HEK293T (cell line): ENCODE measurements at regions of chr3 and their contacts with region 1.

Region 1: DNA sequence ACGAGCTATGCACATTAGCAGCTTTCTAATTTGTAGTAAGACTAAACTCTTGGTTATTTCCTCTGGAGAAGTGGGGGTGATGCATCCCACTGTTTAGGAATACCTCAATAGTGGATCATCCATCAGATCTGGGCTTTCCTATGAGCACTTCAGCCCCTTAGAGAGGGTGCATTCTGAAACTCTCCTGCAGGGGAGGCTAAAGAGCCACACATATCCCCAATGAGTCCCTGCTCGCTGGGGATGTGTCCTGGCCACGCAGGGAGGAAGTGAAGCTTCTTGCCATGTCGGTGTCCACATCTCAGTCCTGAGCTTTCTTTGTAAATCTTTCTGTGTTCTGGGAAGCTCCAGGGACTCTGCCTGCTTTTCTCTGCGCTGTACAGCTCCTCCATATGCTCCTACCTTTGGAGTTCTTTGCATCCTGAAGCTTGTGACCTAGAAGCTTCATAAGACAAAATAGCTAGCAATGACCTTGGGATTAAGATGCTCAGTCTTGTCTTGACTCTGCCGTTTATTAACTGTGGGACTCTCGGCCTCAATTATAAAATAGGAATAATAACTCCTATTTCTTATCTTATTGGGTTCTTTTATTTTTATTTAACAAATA is 28.3 kb upstream of the MASP1 start:
- DNase-seq: peak; percentile 60

Region 2: GRCh38 chr3:187223799-187224198 is 96.0 kb before region 1 on chr3:
- CTCF ChIA-PET with region 1: interaction called, 10 read pairs
- POLR2A ChIA-PET with region 1: no interaction called
- DNase-seq: no peak

Region 3: DNA sequence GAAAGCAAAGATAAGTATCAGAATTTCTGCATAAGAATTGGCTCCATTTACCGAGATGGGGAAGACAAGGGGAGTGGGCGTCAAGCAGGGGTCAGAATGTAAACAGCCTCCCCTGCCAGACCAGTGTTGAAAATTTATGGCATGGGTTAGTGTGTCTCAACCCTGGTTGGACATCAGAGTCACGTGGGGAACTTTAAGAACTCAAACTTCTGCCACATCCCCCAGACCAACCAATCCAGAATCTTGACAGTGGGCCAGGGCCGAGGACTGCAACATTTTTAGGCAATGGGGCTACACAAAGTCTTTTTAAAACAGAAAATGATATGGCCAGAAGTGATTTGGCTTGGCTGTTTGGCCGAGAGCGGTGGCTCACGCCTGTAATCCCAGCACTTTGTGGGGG is 13.9 kb before region 1 on chr3:
- CTCF ChIA-PET with region 1: interaction called, 10 read pairs
- POLR2A ChIA-PET with region 1: no interaction called
- DNase-seq: no peak

Region 4: GRCh38 chr3:187679638-187680396 is 360.0 kb after region 1 on chr3:
- CTCF ChIA-PET with region 1: interaction called, 119 read pairs
- POLR2A ChIA-PET with region 1: interaction called, 5 read pairs
- DNase-seq: peak; percentile 68

Region 5: GRCh38 chr3:187714404-187714979 is 394.7 kb after region 1 on chr3:
- CTCF ChIA-PET with region 1: interaction called, 11 read pairs
- POLR2A ChIA-PET with region 1: no interaction called
- DNase-seq: peak; percentile 65